Heart right ventricle (tissue), 16 donors: ENCODE measurements at regions of chr4 and their contacts with region 1.

Region 1: DNA sequence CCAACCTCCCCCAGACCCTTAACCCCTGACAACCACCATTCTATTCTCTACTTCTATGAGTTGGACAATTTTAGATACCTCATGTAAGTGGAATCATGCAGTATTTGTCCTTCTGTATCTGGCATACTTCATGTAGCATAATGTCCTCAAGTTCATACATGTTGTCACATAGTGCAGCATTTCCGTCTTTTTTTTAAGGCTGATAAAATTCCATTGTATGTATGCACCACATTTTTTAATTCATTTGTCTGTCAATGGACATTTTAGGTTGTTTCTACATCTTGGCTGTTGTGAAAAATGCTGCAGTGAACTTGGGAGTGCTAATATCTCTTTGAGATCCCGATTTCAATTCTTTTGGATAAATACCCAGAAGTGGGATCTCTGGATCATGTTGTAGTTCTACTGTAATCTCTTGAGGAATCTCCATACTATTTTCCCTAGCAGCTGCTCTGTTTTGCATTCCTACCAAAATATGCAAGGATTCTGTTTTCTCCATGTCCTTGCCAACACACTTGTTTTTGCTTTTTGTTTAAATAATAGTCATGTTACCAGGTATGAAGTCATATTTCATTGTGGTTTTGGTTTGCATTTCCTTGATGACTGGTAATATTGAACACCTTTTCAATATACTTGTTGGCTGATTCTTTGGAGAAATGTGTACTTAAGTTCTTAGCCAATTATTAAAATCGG is 48.8 kb upstream of the ADAD1 start:
- DNase-seq: no peak
- ATAC-seq: no peak
- H3K4me3 ChIP-seq: no peak overlapping the region
- H3K27ac ChIP-seq: no peak overlapping the region
- H3K4me1 ChIP-seq: no peaks in the 10 kb centered on the region
- H3K27me3 ChIP-seq: no peaks in the 10 kb centered on the region
- CTCF ChIP-seq: no peak

Region 2: DNA sequence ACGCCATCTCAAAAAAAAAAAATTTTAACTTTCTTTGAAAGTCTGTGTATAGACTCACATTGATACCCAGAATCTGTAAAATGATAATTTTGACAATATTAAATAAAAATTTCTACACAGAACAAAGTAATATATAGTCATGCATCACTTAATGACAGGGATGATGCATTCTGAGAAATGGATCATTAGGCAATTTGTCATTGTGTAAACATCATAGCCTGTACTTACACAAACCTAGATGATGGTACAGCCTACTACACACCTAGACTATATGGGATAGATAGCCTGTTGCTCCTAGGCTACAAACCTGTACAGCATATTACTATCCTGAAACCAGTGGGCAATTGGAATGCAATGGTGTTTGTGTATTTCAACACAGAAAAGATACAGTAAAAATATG is 70.2 kb before region 1 on chr4:
- intact Hi-C with region 1: loop called in 1 of 10 experiments (anchors 10 kb)
- DNase-seq: no peak
- ATAC-seq: no peak
- H3K4me3 ChIP-seq: no peak overlapping the region
- H3K27ac ChIP-seq: no peak overlapping the region
- H3K4me1 ChIP-seq: no peaks in the 10 kb centered on the region
- H3K27me3 ChIP-seq: no peaks in the 10 kb centered on the region
- CTCF ChIP-seq: no peak